ENCODE measurements at regions of chr19 and their contacts with region 1.

Region 1: DNA sequence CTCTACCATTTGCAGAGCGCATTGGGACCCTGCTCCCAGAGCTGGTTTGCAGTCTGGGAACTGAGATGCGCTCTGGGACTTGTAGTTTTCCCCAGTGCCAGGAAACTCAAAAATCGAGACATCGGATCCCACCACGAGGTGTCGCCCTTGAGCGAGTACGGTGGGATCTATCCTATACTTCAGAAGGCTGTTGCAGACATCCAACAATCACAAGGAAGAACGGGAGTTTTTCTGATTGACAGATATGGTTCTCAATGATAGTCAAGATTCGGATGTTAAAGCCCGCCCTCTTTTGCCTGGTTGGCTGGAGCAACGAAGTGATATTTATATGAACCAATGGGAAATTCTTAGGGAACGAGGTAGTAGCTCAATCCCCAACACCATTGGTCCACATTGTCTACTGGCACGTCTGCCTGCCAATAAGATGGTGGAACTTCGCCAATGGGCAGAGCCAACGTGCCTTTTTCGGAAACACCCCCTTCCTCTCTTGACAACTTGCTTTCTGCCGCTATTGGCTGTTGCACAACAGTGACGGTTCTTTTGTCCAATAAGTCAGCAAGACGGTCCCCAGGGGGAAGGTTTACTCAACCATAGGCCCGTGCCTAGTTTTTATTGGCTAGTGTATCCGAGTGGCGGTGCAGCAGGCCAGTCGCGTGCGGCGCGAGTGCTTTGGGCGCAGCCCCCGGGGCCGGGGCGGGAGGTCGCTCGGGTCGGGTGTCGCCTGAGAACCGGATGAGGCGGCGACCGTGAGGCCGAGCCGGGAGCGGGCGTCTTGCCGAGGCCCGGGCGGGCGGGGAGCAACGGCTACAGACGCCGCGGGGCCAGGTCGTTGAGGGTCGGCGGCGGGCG is at the start of gene DNM2:
- DNase-seq: peak; percentile 97
- CTCF ChIP-seq: peak; percentile 73

Region 2: GRCh38 chr19:10612491-10613119 is 105.0 kb before region 1 on chr19:
- CTCF ChIA-PET with region 1: no interaction called
- POLR2A ChIA-PET with region 1: no interaction called
- DNase-seq: peak; percentile 13
- CTCF ChIP-seq: no peak

Region 3: DNA sequence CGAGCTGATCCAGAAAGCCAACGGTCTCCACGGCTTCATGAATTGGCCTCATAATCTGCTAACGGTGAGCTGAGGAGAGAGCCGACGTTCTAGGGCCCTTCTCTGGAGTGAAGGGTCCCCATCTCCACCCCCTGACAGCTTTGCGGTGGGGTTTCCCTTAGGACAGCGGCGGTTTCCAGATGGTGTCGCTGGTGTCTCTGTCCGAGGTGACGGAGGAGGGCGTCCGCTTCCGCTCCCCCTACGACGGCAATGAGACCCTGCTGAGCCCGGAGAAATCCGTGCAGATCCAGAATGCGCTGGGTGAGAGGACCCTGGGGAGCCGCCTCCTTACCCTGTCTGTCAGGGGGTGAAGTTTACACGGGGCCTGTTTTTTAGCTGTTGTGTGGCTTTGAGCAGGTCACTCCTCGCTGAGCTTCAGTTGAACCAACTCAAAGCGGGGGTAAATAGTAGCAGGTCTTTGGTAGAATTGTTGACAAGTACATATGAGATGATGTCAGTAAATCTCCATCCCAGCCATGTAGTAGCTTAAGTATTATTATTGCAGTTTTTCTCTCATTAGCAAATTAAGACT is 15.5 kb before region 1 on chr19:
- CTCF ChIA-PET with region 1: interaction called, 68 read pairs
- POLR2A ChIA-PET with region 1: interaction called, 4 read pairs
- DNase-seq: peak; percentile 63
- CTCF ChIP-seq: peak; percentile 8

Region 4: GRCh38 chr19:10760273-10760944 is 42.8 kb after region 1 on chr19:
- CTCF ChIA-PET with region 1: interaction called, 23 read pairs
- POLR2A ChIA-PET with region 1: no interaction called
- DNase-seq: peak; percentile 48
- CTCF ChIP-seq: no peak

Region 5: GRCh38 chr19:10820173-10820572 is 102.6 kb after region 1 on chr19:
- CTCF ChIA-PET with region 1: interaction called, 12 read pairs
- POLR2A ChIA-PET with region 1: interaction called, 3 read pairs
- DNase-seq: no peak
- CTCF ChIP-seq: peak; percentile 27

Region 6: GRCh38 chr19:10864538-10864899 is 146.9 kb after region 1 on chr19:
- CTCF ChIA-PET with region 1: interaction called, 107 read pairs
- POLR2A ChIA-PET with region 1: interaction called, 5 read pairs
- DNase-seq: peak; percentile 88
- CTCF ChIP-seq: peak; percentile 93

Measured in GM10248 (cell line).